ENCODE measurements at regions of chr10 and their contacts with region 1.

Region 1: DNA sequence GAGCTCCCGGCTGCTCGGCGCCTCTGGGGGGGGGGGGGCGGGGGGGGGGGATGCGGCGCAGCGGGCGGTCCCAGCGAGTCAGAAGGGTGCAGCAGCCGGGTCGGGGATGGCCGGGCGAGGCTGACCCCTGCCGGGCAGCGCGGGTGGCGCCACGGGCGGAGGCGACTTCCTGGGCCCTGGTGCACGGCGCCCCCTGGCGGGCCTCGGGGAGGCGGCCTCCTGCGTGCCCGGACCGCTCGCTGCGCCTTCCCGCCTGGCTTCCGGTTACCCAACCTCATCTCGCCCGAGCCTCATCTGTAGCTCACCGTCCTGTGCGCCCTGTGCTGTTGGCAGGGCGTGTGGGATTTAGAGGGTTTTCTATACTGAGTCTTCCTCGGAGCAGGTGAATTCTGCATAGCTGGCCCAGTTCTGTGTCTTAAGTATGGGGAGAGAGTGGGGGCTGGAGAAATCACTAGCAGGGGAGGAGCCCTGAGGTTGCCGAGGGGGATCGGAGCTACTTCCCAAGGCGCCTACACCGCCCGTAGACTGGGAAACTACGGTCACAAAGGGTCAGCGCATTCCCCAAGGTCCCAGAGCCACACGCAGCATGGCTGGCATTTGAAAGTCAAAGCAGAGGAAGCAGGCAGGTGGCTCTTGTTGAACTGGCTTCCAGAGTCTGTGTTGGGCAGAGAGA is 28.3 kb upstream of the WDFY4 start:
- DNase-seq: peak; percentile 91 to 94 (median 94)
- H3K4me3 ChIP-seq: peak overlapping the region; percentile 30 to 79 (median 69)
- H3K27ac ChIP-seq: no peak overlapping the region
- H3K4me1 ChIP-seq: peaks cover 0 to 26% (median 21%) of the 10 kb centered on the region in 4 experiments
- H3K27me3 ChIP-seq: peaks cover 0 to 6% (median 2%) of the 10 kb centered on the region in 5 experiments

Region 2: GRCh38 chr10:48533951-48534720 is 122.2 kb before region 1 on chr10:
- CTCF ChIA-PET with region 1: interaction called, 11 read pairs
- POLR2A ChIA-PET with region 1: no interaction called
- DNase-seq: no peak
- H3K4me3 ChIP-seq: no peak overlapping the region
- H3K27ac ChIP-seq: no peak overlapping the region
- H3K4me1 ChIP-seq: no peaks in the 10 kb centered on the region
- H3K27me3 ChIP-seq: no peaks in the 10 kb centered on the region

Region 3: GRCh38 chr10:48564466-48565160 is 91.8 kb before region 1 on chr10:
- CTCF ChIA-PET with region 1: interaction called, 381 read pairs
- POLR2A ChIA-PET with region 1: no interaction called
- DNase-seq: no peak
- H3K4me3 ChIP-seq: peak overlapping the region in 1 of 7 experiments; percentile 11
- H3K27ac ChIP-seq: no peak overlapping the region
- H3K4me1 ChIP-seq: peaks cover 3 to 10% (median 6%) of the 10 kb centered on the region in 4 experiments
- H3K27me3 ChIP-seq: no peaks in the 10 kb centered on the region

Region 4: GRCh38 chr10:48623607-48624132 is 32.7 kb before region 1 on chr10:
- CTCF ChIA-PET with region 1: interaction called, 23 read pairs
- POLR2A ChIA-PET with region 1: no interaction called
- DNase-seq: peak; percentile 24 to 83 (median 71)
- H3K4me3 ChIP-seq: peak overlapping the region in 2 of 7 experiments; percentile 19 to 31
- H3K27ac ChIP-seq: no peak overlapping the region
- H3K4me1 ChIP-seq: peaks cover 0 to 14% (median 10%) of the 10 kb centered on the region in 4 experiments
- H3K27me3 ChIP-seq: no peaks in the 10 kb centered on the region

Region 5: GRCh38 chr10:48684792-48685623 is 28.6 kb after region 1 on chr10 and contains the start of gene WDFY4:
- CTCF ChIA-PET with region 1: interaction called, 28 read pairs
- POLR2A ChIA-PET with region 1: no interaction called
- DNase-seq: peak; percentile 74 to 95 (median 92)
- H3K4me3 ChIP-seq: peak within 1 kb of the TSS; percentile 5 to 77 (median 60)
- H3K27ac ChIP-seq: peak within 1 kb of the TSS; percentile 82 to 97
- H3K4me1 ChIP-seq: peaks cover 15 to 42% (median 28%) of the 10 kb centered on the region in 4 experiments
- H3K27me3 ChIP-seq: no peaks in the 10 kb centered on the region

Region 6: DNA sequence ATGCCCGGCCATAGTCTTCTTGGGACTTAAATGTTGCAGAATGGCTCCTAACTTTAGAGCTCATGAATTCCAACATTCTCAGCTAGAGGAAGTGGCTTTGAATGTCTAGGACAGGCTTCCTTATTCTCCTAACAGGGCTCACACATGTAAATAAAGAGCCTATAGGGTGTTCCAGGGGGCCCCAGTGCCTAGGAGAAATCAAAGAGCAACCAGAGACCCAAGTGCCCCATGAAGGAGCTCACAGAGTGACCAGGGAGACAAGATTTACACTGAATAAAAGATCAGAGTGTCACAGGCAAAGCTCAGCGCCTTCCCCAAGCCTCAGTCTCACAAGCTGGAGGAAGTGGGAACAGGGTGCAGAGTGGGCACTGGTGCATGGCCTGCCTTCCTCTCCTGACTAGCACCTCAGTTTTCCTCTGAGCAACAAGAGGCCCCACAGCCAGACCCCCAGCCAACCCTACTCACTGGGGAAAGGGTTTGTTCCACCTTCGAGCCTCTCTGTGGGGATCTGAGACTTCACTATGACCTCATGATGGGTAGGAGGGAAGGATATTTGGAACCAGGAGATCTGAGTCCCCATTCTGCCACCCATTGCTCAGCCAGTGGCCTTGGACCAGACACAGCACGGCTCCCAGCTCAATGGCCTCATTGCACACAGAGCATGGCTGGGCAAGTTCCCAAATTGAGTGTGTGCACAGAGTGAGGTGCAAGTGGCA is 515.8 kb after region 1 on chr10:
- CTCF ChIA-PET with region 1: interaction called, 11 read pairs
- POLR2A ChIA-PET with region 1: no interaction called
- DNase-seq: no peak
- H3K4me3 ChIP-seq: no peak overlapping the region
- H3K27ac ChIP-seq: no peak overlapping the region
- H3K4me1 ChIP-seq: peaks cover 2 to 85% (median 19%) of the 10 kb centered on the region in 4 experiments
- H3K27me3 ChIP-seq: peaks cover 0 to 2% (median 0%) of the 10 kb centered on the region in 5 experiments